Thyroid gland (tissue), 4 donors: ENCODE measurements at regions of chr21 and their contacts with region 1.

Region 1: GRCh38 chr21:36319765-36320420 is at the start of gene MORC3:
- DNase-seq: peak; percentile 97 to 98
- H3K4me3 ChIP-seq: peak within 1 kb of the TSS; percentile 46 to 85 (median 54)
- H3K27ac ChIP-seq: peak within 1 kb of the TSS; percentile 94 to 99 (median 95)
- H3K4me1 ChIP-seq: peaks cover 7 to 10% of the 10 kb centered on the region in 2 donors
- H3K27me3 ChIP-seq: no peaks in the 10 kb centered on the region
- CTCF ChIP-seq: peak in 1 of 6 experiments; percentile 2
- POLR2A ChIP-seq: peak; percentile 24 to 96
- total RNA-seq, gene MORC3: 40.3 to 49.9 (median 42.8) TPM

Region 2: DNA sequence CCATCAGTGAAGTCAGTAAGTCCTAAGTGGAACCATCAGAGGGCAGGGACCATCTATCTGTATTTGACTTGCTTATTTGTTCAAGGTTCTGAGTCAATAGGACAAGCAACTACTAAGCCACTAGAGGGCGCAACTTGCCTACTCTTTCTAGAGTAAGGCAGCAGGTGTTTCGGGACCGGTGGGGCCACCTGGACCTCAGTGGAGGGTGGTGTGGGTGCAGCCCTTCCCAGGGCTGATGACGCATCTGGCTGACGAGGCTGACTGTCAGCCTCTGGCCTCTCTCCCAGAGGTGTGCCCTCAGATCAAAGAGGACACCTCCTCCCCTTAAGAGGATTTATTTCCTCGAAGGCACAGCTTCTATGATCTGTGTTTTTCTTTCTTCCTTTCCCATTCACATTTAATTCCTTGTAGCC is 178.4 kb before region 1 on chr21:
- intact Hi-C with region 1: loop called (anchors 10 kb)
- DNase-seq: peak; percentile 93
- H3K4me3 ChIP-seq: no peak overlapping the region
- H3K27ac ChIP-seq: no peak overlapping the region
- H3K4me1 ChIP-seq: no peaks in the 10 kb centered on the region
- H3K27me3 ChIP-seq: no peaks in the 10 kb centered on the region
- CTCF ChIP-seq: peak; percentile 55 to 95 (median 87)
- POLR2A ChIP-seq: no peak